ENCODE measurements at regions of chr19 and their contacts with region 1.

Region 1: GRCh38 chr19:5790573-5791520 is at the start of gene DUS3L:
- DNase-seq: peak; percentile 97
- H3K27ac ChIP-seq: peak within 1 kb of the TSS; percentile 97
- CTCF ChIP-seq: no peak

Region 2: GRCh38 chr19:5774921-5775320 is 15.9 kb before region 1 on chr19:
- CTCF ChIA-PET with region 1: interaction called, 7 read pairs
- POLR2A ChIA-PET with region 1: interaction called, 10 read pairs
- DNase-seq: no peak
- H3K27ac ChIP-seq: no peak overlapping the region
- CTCF ChIP-seq: no peak

Region 3: GRCh38 chr19:5913739-5914357 is 123.0 kb after region 1 on chr19 and contains the start of gene CAPS:
- CTCF ChIA-PET with region 1: no interaction called
- POLR2A ChIA-PET with region 1: no interaction called
- DNase-seq: peak; percentile 74
- H3K27ac ChIP-seq: peak within 1 kb of the TSS; percentile 84
- CTCF ChIP-seq: no peak

Region 4: GRCh38 chr19:6393074-6393983 is 602.5 kb after region 1 on chr19 and contains the start of gene GTF2F1:
- CTCF ChIA-PET with region 1: interaction called, 3 read pairs
- POLR2A ChIA-PET with region 1: interaction called, 10 read pairs
- DNase-seq: peak; percentile 99
- H3K27ac ChIP-seq: peak within 1 kb of the TSS; percentile 88
- CTCF ChIP-seq: no peak